Endothelial cell of umbilical vein (primary cell): ENCODE measurements at regions of chr19 and their contacts with region 1.

Region 1: GRCh38 chr19:9674663-9675357 is at the start of gene ZNF562:
- DNase-seq: peak; percentile 89
- H3K4me3 ChIP-seq: peak within 1 kb of the TSS; percentile 73 to 88 (median 74)
- H3K27ac ChIP-seq: peak within 1 kb of the TSS; percentile 85
- H3K4me1 ChIP-seq: no peaks in the 10 kb centered on the region
- H3K27me3 ChIP-seq: no peaks in the 10 kb centered on the region
- CTCF ChIP-seq: no peak
- POLR2A ChIP-seq: peak; percentile 89
- total RNA-seq, gene ZNF562: 22.3 and 27.0 TPM in 2 replicates

Region 2: GRCh38 chr19:9128171-9128570 is 546.6 kb before region 1 on chr19:
- CTCF ChIA-PET with region 1: no interaction called
- POLR2A ChIA-PET with region 1: no interaction called
- dilution Hi-C with region 1: no loop called
- intact Hi-C with region 1: loop called (anchors 1 kb)
- DNase-seq: peak; percentile 96
- H3K4me3 ChIP-seq: no peak overlapping the region
- H3K27ac ChIP-seq: peak overlapping the region; percentile 76
- H3K4me1 ChIP-seq: peaks cover 5% of the 10 kb centered on the region
- H3K27me3 ChIP-seq: no peaks in the 10 kb centered on the region
- CTCF ChIP-seq: no peak
- POLR2A ChIP-seq: peak; percentile 29

Region 3: DNA sequence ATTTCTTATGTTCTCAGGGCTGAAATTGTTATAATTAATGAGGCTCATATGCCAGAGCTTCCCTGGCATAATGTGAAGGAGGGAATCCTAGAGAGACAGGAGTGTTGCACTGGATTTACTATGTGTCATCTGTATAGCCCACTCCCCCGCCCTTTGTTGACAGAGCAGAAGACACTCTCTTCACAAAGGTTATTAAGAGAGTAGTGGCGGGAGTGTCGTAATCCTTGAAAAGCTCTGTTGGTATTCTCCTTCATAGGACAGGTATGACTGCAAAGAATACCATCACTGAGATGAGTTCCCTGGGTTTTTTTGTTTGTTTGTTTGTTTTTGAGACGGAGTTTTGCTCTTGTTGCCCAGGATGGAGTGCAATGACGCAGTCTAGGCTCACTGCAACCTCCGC is 104.6 kb before region 1 on chr19:
- CTCF ChIA-PET with region 1: no interaction called
- POLR2A ChIA-PET with region 1: no interaction called
- dilution Hi-C with region 1: no loop called
- intact Hi-C with region 1: no loop called
- DNase-seq: no peak
- H3K4me3 ChIP-seq: no peak overlapping the region
- H3K27ac ChIP-seq: no peak overlapping the region
- H3K4me1 ChIP-seq: no peaks in the 10 kb centered on the region
- H3K27me3 ChIP-seq: no peaks in the 10 kb centered on the region
- CTCF ChIP-seq: no peak
- POLR2A ChIP-seq: no peak

Region 4: GRCh38 chr19:9610484-9611113 is 64.2 kb before region 1 on chr19:
- CTCF ChIA-PET with region 1: no interaction called
- POLR2A ChIA-PET with region 1: no interaction called
- dilution Hi-C with region 1: no loop called
- intact Hi-C with region 1: no loop called
- DNase-seq: no peak
- H3K4me3 ChIP-seq: no peak overlapping the region
- H3K27ac ChIP-seq: no peak overlapping the region
- H3K4me1 ChIP-seq: no peaks in the 10 kb centered on the region
- H3K27me3 ChIP-seq: no peaks in the 10 kb centered on the region
- CTCF ChIP-seq: no peak
- POLR2A ChIP-seq: no peak

Region 5: GRCh38 chr19:9768175-9769112 is 93.6 kb after region 1 on chr19 and contains the start of gene ZNF846:
- CTCF ChIA-PET with region 1: interaction called, 3 read pairs
- POLR2A ChIA-PET with region 1: no interaction called
- dilution Hi-C with region 1: no loop called
- intact Hi-C with region 1: loop called (anchors 1 kb)
- DNase-seq: peak; percentile 93
- H3K4me3 ChIP-seq: peak within 1 kb of the TSS; percentile 42 to 85 (median 83)
- H3K27ac ChIP-seq: peak within 1 kb of the TSS; percentile 85
- H3K4me1 ChIP-seq: peaks cover 7% of the 10 kb centered on the region
- H3K27me3 ChIP-seq: no peaks in the 10 kb centered on the region
- CTCF ChIP-seq: no peak
- POLR2A ChIP-seq: peak; percentile 72
- total RNA-seq, gene ZNF846: 6.9 and 8.3 TPM in 2 replicates

Region 6: DNA sequence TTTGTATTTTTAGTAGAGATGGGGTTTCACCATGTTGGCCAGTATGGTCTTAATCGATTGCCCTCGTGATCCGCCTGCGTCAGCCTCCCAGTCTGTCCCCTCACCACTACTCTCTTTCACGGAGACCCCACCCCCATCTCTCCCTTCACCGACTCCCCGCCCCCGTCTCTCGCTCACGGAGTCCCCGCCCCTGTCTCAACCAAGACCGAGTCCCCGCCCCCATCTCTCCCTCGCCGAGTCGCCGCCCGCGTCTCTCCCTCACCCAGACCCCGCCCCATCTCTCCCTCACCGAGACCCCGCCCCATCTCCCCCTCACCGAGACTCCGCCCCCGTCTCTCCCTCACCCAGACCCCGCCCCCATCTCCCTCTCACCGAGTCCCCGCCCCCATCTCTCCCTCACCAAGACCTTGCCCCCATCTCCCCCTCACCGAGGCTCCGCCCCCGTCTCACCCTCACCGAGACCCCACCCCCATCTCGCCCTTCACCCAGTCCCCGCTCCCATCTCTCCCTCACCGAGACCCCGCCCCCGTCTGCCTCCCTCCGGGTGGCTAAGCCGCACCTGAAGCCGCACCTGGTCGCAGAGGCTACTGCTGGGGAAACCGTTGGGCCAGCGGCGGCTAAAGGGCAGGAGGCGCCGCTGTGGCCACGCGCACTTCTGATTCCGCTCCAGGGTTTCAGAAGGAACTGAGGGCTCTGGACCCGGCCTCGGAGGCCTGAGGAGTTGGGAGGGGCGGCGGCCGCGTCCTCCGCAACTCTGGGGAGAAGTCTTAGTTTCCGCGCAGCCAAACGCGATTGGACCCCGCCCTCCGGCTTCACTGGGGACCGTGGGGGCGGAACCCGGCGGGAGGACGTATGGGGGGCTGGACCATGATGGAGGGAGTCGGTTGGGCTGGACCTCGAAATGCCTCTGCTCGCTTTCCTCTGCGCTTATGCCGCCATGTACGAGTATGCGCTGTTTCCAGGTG is 110.8 kb after region 1 on chr19:
- CTCF ChIA-PET with region 1: no interaction called
- POLR2A ChIA-PET with region 1: no interaction called
- dilution Hi-C with region 1: no loop called
- intact Hi-C with region 1: loop called (anchors 1 kb)
- DNase-seq: peak; percentile 92
- H3K4me3 ChIP-seq: peak overlapping the region; percentile 77 to 93 (median 78)
- H3K27ac ChIP-seq: peak overlapping the region; percentile 54
- H3K4me1 ChIP-seq: peaks cover 4% of the 10 kb centered on the region
- H3K27me3 ChIP-seq: no peaks in the 10 kb centered on the region
- CTCF ChIP-seq: no peak
- POLR2A ChIP-seq: peak; percentile 54